Caco-2 (cell line): ENCODE measurements at regions of chr18 and their contacts with region 1.

Region 1: GRCh38 chr18:2655178-2655953 is at the start of gene SMCHD1:
- DNase-seq: peak; percentile 80 to 89
- H3K4me3 ChIP-seq: peak within 1 kb of the TSS; percentile 88
- H3K4me3 Mint-ChIP-seq: peak within 1 kb of the TSS; percentile 70
- H3K27ac Mint-ChIP-seq: peak within 1 kb of the TSS; percentile 21
- H3K4me1 ChIP-seq: peaks cover 28% of the 10 kb centered on the region
- H3K4me1 Mint-ChIP-seq: peaks cover 7% of the 10 kb centered on the region
- H3K27me3 ChIP-seq: no peaks in the 10 kb centered on the region
- H3K27me3 Mint-ChIP-seq: no peaks in the 10 kb centered on the region
- CTCF ChIP-seq: no peak
- total RNA-seq, gene SMCHD1: 56.6 and 57.4 TPM in 2 replicates

Region 2: DNA sequence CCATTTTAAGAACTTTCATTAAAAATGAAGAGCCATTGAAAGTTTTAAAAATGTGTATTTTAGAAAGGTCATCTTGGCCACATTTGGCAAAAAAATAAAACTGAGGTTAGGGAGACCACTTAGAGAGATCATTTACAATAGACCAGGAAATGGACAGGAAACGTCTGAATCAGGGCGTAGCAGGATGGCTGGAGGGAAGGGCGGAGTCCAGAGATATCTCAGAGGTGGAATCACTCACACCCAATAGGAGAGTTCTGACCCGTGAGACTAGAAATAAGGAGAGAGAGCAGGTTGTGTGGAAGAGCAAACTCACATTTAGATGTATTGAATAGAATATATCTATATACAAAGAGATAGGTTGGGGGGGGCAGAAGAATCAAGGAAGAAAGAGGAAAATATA is 457.4 kb before region 1 on chr18:
- CTCF ChIA-PET with region 1: no interaction called
- POLR2A ChIA-PET with region 1: no interaction called
- intact Hi-C with region 1: no loop called
- DNase-seq: no peak
- H3K4me3 ChIP-seq: no peak overlapping the region
- H3K4me3 Mint-ChIP-seq: no peak overlapping the region
- H3K27ac Mint-ChIP-seq: no peak overlapping the region
- H3K4me1 ChIP-seq: no peaks in the 10 kb centered on the region
- H3K4me1 Mint-ChIP-seq: no peaks in the 10 kb centered on the region
- H3K27me3 ChIP-seq: no peaks in the 10 kb centered on the region
- H3K27me3 Mint-ChIP-seq: no peaks in the 10 kb centered on the region
- CTCF ChIP-seq: no peak

Region 3: GRCh38 chr18:2325308-2325849 is 330.0 kb before region 1 on chr18:
- CTCF ChIA-PET with region 1: no interaction called
- POLR2A ChIA-PET with region 1: no interaction called
- intact Hi-C with region 1: loop called (anchors 10 kb)
- DNase-seq: peak; percentile 49 to 59
- H3K4me3 ChIP-seq: no peak overlapping the region
- H3K4me3 Mint-ChIP-seq: peak overlapping the region; percentile 45
- H3K27ac Mint-ChIP-seq: peak overlapping the region; percentile 87
- H3K4me1 ChIP-seq: peaks cover 26% of the 10 kb centered on the region
- H3K4me1 Mint-ChIP-seq: peaks cover 17% of the 10 kb centered on the region
- H3K27me3 ChIP-seq: no peaks in the 10 kb centered on the region
- H3K27me3 Mint-ChIP-seq: no peaks in the 10 kb centered on the region
- CTCF ChIP-seq: no peak

Region 4: GRCh38 chr18:2522112-2522511 is 133.3 kb before region 1 on chr18:
- CTCF ChIA-PET with region 1: no interaction called
- POLR2A ChIA-PET with region 1: no interaction called
- intact Hi-C with region 1: no loop called
- DNase-seq: no peak
- H3K4me3 ChIP-seq: no peak overlapping the region
- H3K4me3 Mint-ChIP-seq: no peak overlapping the region
- H3K27ac Mint-ChIP-seq: no peak overlapping the region
- H3K4me1 ChIP-seq: no peaks in the 10 kb centered on the region
- H3K4me1 Mint-ChIP-seq: no peaks in the 10 kb centered on the region
- H3K27me3 ChIP-seq: no peaks in the 10 kb centered on the region
- H3K27me3 Mint-ChIP-seq: peaks cover 11% of the 10 kb centered on the region
- CTCF ChIP-seq: no peak

Region 5: DNA sequence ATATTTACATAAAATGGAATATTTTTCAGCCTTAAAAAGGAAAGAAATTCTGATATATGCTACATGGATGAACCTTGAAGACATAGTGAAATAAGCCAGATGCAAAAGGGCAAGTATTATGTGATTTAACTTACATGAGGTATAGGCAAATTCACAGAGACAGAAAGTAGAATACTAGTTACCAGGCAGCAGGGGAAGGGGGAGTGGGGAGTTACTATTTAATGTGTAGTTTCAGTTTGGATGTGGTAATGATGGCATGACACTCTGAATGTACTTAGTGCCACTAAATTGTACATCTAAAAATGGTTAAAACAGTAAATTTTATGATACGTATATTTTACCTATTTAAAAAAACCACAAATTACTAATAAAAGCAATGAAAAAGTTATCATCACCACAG is 96.1 kb before region 1 on chr18:
- CTCF ChIA-PET with region 1: no interaction called
- POLR2A ChIA-PET with region 1: no interaction called
- intact Hi-C with region 1: no loop called
- DNase-seq: no peak
- H3K4me3 ChIP-seq: no peak overlapping the region
- H3K4me3 Mint-ChIP-seq: no peak overlapping the region
- H3K27ac Mint-ChIP-seq: no peak overlapping the region
- H3K4me1 ChIP-seq: no peaks in the 10 kb centered on the region
- H3K4me1 Mint-ChIP-seq: no peaks in the 10 kb centered on the region
- H3K27me3 ChIP-seq: no peaks in the 10 kb centered on the region
- H3K27me3 Mint-ChIP-seq: no peaks in the 10 kb centered on the region
- CTCF ChIP-seq: no peak

Region 6: GRCh38 chr18:2571200-2572143 is 83.9 kb before region 1 on chr18 and contains the starts of genes METTL4 and NDC80:
- CTCF ChIA-PET with region 1: no interaction called
- POLR2A ChIA-PET with region 1: interaction called, 4 read pairs
- intact Hi-C with region 1: loop called (anchors 5 kb)
- DNase-seq: peak; percentile 86 to 87
- H3K4me3 ChIP-seq: peak within 1 kb of the TSS; percentile 45
- H3K4me3 Mint-ChIP-seq: peak within 1 kb of the TSS; percentile 94
- H3K27ac Mint-ChIP-seq: peak within 1 kb of the TSS; percentile 98
- H3K4me1 ChIP-seq: peaks cover 21% of the 10 kb centered on the region
- H3K4me1 Mint-ChIP-seq: peaks cover 6% of the 10 kb centered on the region
- H3K27me3 ChIP-seq: no peaks in the 10 kb centered on the region
- H3K27me3 Mint-ChIP-seq: no peaks in the 10 kb centered on the region
- CTCF ChIP-seq: no peak
- total RNA-seq, gene METTL4: 15.0 and 20.1 TPM in 2 replicates
- total RNA-seq, gene NDC80: 51.7 and 52.6 TPM in 2 replicates

Region 7: GRCh38 chr18:2606335-2606734 is 49.0 kb before region 1 on chr18:
- CTCF ChIA-PET with region 1: no interaction called
- POLR2A ChIA-PET with region 1: no interaction called
- intact Hi-C with region 1: no loop called
- DNase-seq: no peak
- H3K4me3 ChIP-seq: no peak overlapping the region
- H3K4me3 Mint-ChIP-seq: no peak overlapping the region
- H3K27ac Mint-ChIP-seq: no peak overlapping the region
- H3K4me1 ChIP-seq: no peaks in the 10 kb centered on the region
- H3K4me1 Mint-ChIP-seq: peaks cover 7% of the 10 kb centered on the region
- H3K27me3 ChIP-seq: no peaks in the 10 kb centered on the region
- H3K27me3 Mint-ChIP-seq: no peaks in the 10 kb centered on the region
- CTCF ChIP-seq: no peak